ENCODE measurements at regions of chr6 and their contacts with region 1.

Region 1: GRCh38 chr6:139375232-139376016 is 976 bp upstream of the CITED2 start:
- DNase-seq: peak; percentile 98
- H3K4me3 Mint-ChIP-seq: peak overlapping the region; percentile 97
- H3K27ac Mint-ChIP-seq: peak overlapping the region; percentile 97
- H3K4me1 Mint-ChIP-seq: peaks cover 33% of the 10 kb centered on the region
- H3K27me3 Mint-ChIP-seq: no peaks in the 10 kb centered on the region
- CTCF ChIP-seq: no peak

Region 2: GRCh38 chr6:138785980-138786379 is 589.4 kb before region 1 on chr6:
- CTCF ChIA-PET with region 1: no interaction called
- POLR2A ChIA-PET with region 1: no interaction called
- intact Hi-C with region 1: no loop called
- DNase-seq: no peak
- H3K4me3 Mint-ChIP-seq: no peak overlapping the region
- H3K27ac Mint-ChIP-seq: no peak overlapping the region
- H3K4me1 Mint-ChIP-seq: no peaks in the 10 kb centered on the region
- H3K27me3 Mint-ChIP-seq: no peaks in the 10 kb centered on the region
- CTCF ChIP-seq: no peak

Region 3: DNA sequence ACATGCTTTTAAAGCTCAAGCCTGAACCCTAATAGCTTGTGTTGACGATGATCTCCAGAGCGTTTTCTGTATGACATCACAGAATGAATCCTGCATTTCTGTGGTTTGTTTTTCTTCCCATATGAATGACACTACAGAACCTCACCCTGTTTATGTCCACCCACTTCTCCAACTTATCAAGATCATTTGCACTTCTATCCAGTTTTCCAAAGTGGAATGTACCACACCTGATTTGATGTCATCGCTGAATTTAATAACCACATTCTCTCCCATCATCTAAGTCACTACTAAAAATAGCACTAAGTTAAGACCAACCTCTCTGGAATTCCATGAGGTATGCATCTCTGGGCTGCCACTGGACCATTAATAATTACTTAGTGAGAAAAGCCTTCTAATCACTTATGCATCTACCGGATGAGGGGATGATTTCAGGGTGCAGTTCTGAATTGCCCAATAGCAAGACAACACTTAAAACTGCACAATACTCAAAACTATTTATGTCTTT is 32.3 kb after region 1 on chr6:
- CTCF ChIA-PET with region 1: interaction called, 3 read pairs
- POLR2A ChIA-PET with region 1: interaction called, 83 read pairs
- intact Hi-C with region 1: loop called (anchors 2 kb)
- DNase-seq: peak; percentile 50
- H3K4me3 Mint-ChIP-seq: peak overlapping the region; percentile 30
- H3K27ac Mint-ChIP-seq: peak overlapping the region; percentile 94
- H3K4me1 Mint-ChIP-seq: peaks cover 33% of the 10 kb centered on the region
- H3K27me3 Mint-ChIP-seq: no peaks in the 10 kb centered on the region
- CTCF ChIP-seq: no peak

Region 4: DNA sequence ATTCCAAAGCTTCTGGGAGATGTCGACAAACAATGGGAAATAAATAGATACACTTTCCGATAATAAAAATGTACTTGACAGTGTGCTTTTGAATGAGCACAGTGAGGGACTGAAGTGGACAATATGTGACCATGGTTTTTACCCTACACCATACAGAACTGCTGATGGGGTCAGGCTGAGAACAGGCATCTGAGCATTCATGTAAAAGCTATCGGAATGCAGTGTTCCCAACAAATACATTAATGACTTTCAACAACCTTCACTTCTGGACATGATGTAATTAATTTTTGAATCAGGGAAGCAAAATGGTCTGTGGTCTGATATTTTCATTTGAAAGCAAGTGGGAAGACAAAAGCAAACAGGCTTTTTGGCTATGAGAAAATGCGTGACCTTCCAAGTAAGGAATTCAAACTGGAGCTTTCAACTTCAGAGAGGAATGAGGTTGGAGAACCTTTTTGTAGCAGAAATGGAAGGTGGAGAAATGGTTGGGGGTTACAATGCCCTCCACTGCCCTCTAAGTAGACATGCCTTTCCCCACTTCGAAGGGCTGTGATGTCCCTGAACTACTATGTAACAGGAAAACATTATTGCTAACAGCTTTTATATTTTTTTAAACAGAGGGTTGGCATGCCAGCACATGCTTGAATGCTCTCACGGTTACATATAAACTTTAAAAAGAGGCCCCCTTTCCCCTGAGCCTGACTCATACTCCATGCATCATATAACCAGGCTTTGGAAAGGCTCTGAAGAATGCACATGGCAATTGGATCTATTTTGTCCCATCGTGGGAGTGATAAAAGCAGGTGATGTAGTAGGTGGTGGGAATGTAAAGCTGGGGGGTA is 202.6 kb after region 1 on chr6:
- CTCF ChIA-PET with region 1: no interaction called
- POLR2A ChIA-PET with region 1: interaction called, 15 read pairs
- intact Hi-C with region 1: no loop called
- DNase-seq: peak; percentile 59
- H3K4me3 Mint-ChIP-seq: no peak overlapping the region
- H3K27ac Mint-ChIP-seq: peak overlapping the region; percentile 77
- H3K4me1 Mint-ChIP-seq: peaks cover 22% of the 10 kb centered on the region
- H3K27me3 Mint-ChIP-seq: no peaks in the 10 kb centered on the region
- CTCF ChIP-seq: no peak

Region 5: DNA sequence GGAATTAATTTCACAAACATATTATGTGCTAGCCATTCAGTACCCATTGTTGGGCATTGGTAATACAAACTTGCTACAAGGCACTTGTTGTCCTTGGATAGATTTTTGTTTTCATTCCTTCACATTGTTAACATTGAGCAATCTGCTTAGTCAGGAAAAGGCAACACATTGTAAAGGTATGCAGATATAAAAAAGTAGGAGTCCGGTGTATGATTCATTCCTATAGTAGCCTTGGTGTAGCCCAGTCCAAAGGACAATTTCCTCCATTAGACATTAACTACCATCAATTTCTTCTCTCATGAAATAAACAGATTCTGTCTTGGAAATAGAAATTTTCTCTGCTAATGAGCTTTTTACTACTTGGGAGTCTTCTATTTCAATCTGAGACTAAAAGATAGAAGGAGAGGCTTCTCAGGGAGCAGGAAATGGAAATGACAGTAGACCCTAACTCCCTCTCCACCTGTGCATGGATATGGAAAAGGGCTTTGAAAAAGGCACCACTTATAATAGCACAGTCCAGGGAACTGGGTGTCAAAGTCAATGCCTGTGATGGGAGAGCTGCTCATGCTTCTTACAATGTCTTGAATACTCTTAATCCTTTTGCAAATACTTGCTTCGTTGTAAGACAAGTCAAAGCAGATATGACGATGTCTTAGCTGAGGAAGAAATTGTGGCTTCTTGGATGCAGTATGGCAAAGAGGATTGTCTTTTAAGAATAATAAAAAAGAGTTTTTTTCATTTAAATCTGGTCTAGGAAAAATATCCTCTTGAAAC is 368.4 kb after region 1 on chr6:
- CTCF ChIA-PET with region 1: interaction called, 3 read pairs
- POLR2A ChIA-PET with region 1: interaction called, 25 read pairs
- intact Hi-C with region 1: loop called (anchors 10 kb)
- DNase-seq: peak; percentile 93
- H3K4me3 Mint-ChIP-seq: no peak overlapping the region
- H3K27ac Mint-ChIP-seq: peak overlapping the region; percentile 85
- H3K4me1 Mint-ChIP-seq: peaks cover 50% of the 10 kb centered on the region
- H3K27me3 Mint-ChIP-seq: no peaks in the 10 kb centered on the region
- CTCF ChIP-seq: no peak

Region 6: DNA sequence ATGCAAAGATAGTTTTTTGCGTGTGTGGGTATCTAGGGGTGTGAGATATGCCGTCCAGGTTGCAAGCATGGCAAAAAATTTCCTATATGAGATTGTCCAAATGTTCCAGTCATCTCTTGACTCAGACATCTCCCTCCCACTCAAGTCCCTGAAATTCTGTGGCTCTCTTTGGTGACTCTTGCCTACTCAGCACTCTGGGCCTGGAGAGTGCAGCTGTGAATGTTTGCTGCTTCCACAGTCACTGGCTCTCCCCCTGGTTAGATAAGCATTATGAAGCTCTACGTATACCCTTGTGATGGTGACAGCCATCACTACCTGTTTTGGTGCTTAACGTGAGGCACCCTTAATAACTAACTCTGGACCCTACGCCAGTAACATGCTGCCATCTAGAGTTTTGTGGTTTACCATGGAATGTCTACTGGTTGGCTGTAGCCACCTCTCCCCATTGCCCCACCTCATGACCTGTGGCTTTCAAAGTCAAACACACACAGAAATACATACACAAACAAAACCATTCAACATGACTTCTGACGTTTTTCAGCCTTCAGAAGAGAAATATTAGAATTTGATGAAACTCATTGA is 620.9 kb after region 1 on chr6:
- CTCF ChIA-PET with region 1: no interaction called
- POLR2A ChIA-PET with region 1: interaction called, 7 read pairs
- intact Hi-C with region 1: loop called (anchors 5 kb)
- DNase-seq: peak; percentile 14
- H3K4me3 Mint-ChIP-seq: no peak overlapping the region
- H3K27ac Mint-ChIP-seq: no peak overlapping the region
- H3K4me1 Mint-ChIP-seq: no peaks in the 10 kb centered on the region
- H3K27me3 Mint-ChIP-seq: no peaks in the 10 kb centered on the region
- CTCF ChIP-seq: peak; percentile 18

Region 7: DNA sequence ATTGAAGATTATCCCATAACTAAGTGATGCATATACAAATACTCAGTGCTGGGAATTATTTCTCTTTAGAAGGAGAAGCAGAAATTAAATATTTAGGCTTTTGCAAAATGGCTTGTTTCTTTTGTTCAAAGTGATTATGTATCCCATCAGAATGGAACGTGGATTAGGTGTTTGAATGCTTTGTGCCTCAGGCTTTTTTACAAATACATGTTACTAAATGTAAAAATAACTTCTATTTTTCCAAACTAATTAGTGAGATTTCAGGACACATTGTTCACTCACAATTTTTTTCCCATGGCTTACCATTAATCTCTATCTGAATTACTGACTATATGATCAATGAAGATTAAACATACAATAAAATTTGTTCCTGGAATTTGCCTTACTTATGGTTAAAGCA is 924.9 kb after region 1 on chr6:
- CTCF ChIA-PET with region 1: no interaction called
- POLR2A ChIA-PET with region 1: interaction called, 10 read pairs
- intact Hi-C with region 1: loop called (anchors 10 kb)
- DNase-seq: no peak
- H3K4me3 Mint-ChIP-seq: no peak overlapping the region
- H3K27ac Mint-ChIP-seq: no peak overlapping the region
- H3K4me1 Mint-ChIP-seq: no peaks in the 10 kb centered on the region
- H3K27me3 Mint-ChIP-seq: no peaks in the 10 kb centered on the region
- CTCF ChIP-seq: no peak

Region 8: DNA sequence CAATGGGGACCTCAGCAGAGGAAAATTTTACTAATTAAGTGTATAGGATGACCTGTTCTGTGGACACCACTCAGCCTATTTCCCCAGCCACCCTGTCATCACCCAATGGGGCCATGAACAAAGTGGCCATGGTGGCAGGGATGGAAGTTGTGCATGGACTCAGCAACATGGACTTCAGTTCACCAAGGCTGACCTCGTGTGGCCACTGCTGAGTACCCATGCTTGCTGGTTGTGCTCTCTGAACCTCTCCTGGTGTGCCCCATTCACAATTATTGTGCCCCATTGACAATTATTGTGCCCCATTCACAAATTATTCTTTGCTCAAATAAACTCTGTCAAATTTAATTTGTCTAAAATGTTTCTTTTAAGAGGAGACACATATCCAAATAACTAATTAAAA is 1274.7 kb after region 1 on chr6:
- CTCF ChIA-PET with region 1: no interaction called
- POLR2A ChIA-PET with region 1: no interaction called
- intact Hi-C with region 1: loop called (anchors 5 kb)
- DNase-seq: peak; percentile 3
- H3K4me3 Mint-ChIP-seq: no peak overlapping the region
- H3K27ac Mint-ChIP-seq: no peak overlapping the region
- H3K4me1 Mint-ChIP-seq: no peaks in the 10 kb centered on the region
- H3K27me3 Mint-ChIP-seq: no peaks in the 10 kb centered on the region
- CTCF ChIP-seq: no peak

Measured in MCF 10A (cell line).